ENCODE measurements at regions of chr11 and their contacts with region 1.

Region 1: GRCh38 chr11:126062679-126063506 is at the start of gene CDON:
- DNase-seq: peak; percentile 97
- ATAC-seq: peak; percentile 93
- H3K4me3 ChIP-seq: peak within 1 kb of the TSS; percentile 75
- H3K27ac ChIP-seq: peak within 1 kb of the TSS; percentile 64
- H3K4me1 ChIP-seq: peaks cover 22% of the 10 kb centered on the region
- H3K27me3 ChIP-seq: no peaks in the 10 kb centered on the region
- CTCF ChIP-seq: no peak
- total RNA-seq, gene CDON: 4.4 and 10.1 TPM in 2 replicates

Region 2: GRCh38 chr11:125887373-125888324 is 175.2 kb before region 1 on chr11 and contains the start of gene HYLS1:
- CTCF ChIA-PET with region 1: no interaction called
- POLR2A ChIA-PET with region 1: interaction called, 3 read pairs
- intact Hi-C with region 1: loop called (anchors 1 kb)
- DNase-seq: peak; percentile 99
- ATAC-seq: peak; percentile 83
- H3K4me3 ChIP-seq: peak within 1 kb of the TSS; percentile 83
- H3K27ac ChIP-seq: peak within 1 kb of the TSS; percentile 87
- H3K4me1 ChIP-seq: peaks cover 59% of the 10 kb centered on the region
- H3K27me3 ChIP-seq: no peaks in the 10 kb centered on the region
- CTCF ChIP-seq: peak; percentile 39
- total RNA-seq, gene HYLS1: 16.4 and 23.5 TPM in 2 replicates

Region 3: GRCh38 chr11:125941619-125942611 is 121.0 kb before region 1 on chr11:
- CTCF ChIA-PET with region 1: interaction called, 8 read pairs
- POLR2A ChIA-PET with region 1: no interaction called
- intact Hi-C with region 1: loop called (anchors 2 kb)
- DNase-seq: peak; percentile 72
- ATAC-seq: peak; percentile 90
- H3K4me3 ChIP-seq: no peak overlapping the region
- H3K27ac ChIP-seq: no peak overlapping the region
- H3K4me1 ChIP-seq: peaks cover 6% of the 10 kb centered on the region; the same call in 1 of the 2 replicates
- H3K27me3 ChIP-seq: no peaks in the 10 kb centered on the region
- CTCF ChIP-seq: peak; percentile 96

Region 4: DNA sequence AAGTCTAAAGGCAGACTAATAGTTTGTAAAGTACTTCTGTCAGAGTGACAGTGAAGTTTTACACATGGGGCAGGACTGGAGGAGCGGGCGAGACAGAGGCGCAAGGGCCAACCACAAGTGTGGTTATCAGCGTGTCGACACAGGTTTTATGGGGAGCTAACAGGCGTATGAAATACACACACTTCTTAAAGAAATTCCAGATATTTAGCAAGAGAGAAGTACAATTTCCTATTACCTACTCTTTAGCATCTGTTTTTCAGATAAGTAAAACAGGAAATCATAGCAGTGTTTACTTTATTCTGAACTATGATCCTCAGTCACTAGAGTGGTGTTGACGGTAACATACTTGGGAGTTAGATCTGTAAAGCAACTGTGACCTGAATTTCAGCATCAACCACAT is 94.5 kb before region 1 on chr11:
- CTCF ChIA-PET with region 1: no interaction called
- POLR2A ChIA-PET with region 1: no interaction called
- intact Hi-C with region 1: no loop called
- DNase-seq: no peak
- ATAC-seq: no peak
- H3K4me3 ChIP-seq: no peak overlapping the region
- H3K27ac ChIP-seq: no peak overlapping the region
- H3K4me1 ChIP-seq: peaks cover 6% of the 10 kb centered on the region
- H3K27me3 ChIP-seq: no peaks in the 10 kb centered on the region
- CTCF ChIP-seq: no peak

Region 5: GRCh38 chr11:126039485-126040271 is 23.2 kb before region 1 on chr11:
- CTCF ChIA-PET with region 1: no interaction called
- POLR2A ChIA-PET with region 1: no interaction called
- intact Hi-C with region 1: loop called (anchors 1 kb)
- DNase-seq: peak; percentile 75
- ATAC-seq: peak; percentile 96
- H3K4me3 ChIP-seq: peak overlapping the region; percentile 43
- H3K27ac ChIP-seq: peak overlapping the region; percentile 50
- H3K4me1 ChIP-seq: peaks cover 18% of the 10 kb centered on the region
- H3K27me3 ChIP-seq: no peaks in the 10 kb centered on the region
- CTCF ChIP-seq: no peak

Region 6: DNA sequence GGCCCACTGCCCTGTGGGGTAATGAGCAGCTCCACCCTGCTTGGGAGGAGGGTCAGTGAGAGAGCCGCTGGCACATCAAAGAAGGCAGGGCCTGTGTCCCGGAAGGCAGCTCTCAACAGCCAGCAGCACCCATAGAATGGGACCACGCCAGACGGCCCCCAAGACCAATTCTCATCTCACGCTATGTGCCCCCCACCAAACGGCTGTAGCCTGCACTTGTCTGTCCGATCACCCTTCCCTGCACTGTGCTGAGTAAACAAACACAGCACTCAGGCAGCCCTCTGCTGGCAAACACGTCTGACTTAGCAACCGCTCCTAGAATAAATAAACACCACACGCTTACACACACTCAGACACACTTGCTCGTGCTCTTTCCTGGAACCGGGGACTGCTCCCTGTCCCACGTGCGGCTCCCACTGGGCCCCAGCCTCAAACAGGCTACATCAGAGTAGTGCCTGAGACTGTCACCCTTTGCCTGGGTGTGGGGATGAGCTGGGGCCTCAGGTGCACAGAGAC is 53.0 kb after region 1 on chr11:
- CTCF ChIA-PET with region 1: interaction called, 6 read pairs
- POLR2A ChIA-PET with region 1: interaction called, 3 read pairs
- intact Hi-C with region 1: loop called (anchors 1 kb)
- DNase-seq: peak; percentile 88
- ATAC-seq: peak; percentile 87
- H3K4me3 ChIP-seq: peak overlapping the region; percentile 40; the same call in 1 of the 2 replicates
- H3K27ac ChIP-seq: no peak overlapping the region
- H3K4me1 ChIP-seq: peaks cover 37% of the 10 kb centered on the region
- H3K27me3 ChIP-seq: no peaks in the 10 kb centered on the region
- CTCF ChIP-seq: peak; percentile 50

Region 7: GRCh38 chr11:126194121-126194543 is 131.2 kb after region 1 on chr11:
- CTCF ChIA-PET with region 1: interaction called, 6 read pairs
- POLR2A ChIA-PET with region 1: no interaction called
- intact Hi-C with region 1: loop called (anchors 1 kb)
- DNase-seq: peak; percentile 80
- ATAC-seq: peak; percentile 71
- H3K4me3 ChIP-seq: no peak overlapping the region
- H3K27ac ChIP-seq: no peak overlapping the region
- H3K4me1 ChIP-seq: no peaks in the 10 kb centered on the region
- H3K27me3 ChIP-seq: no peaks in the 10 kb centered on the region
- CTCF ChIP-seq: peak; percentile 91